ENCODE measurements at regions of chr11 and their contacts with region 1.

Region 1: GRCh38 chr11:75150879-75151278 is at the start of gene SLCO2B1:
- DNase-seq: no peak
- H3K4me3 Mint-ChIP-seq: no peak within 1 kb of the TSS
- H3K27ac Mint-ChIP-seq: no peak within 1 kb of the TSS
- H3K4me1 Mint-ChIP-seq: peaks cover 4% of the 10 kb centered on the region
- H3K27me3 Mint-ChIP-seq: peaks cover 7% of the 10 kb centered on the region
- total RNA-seq, gene SLCO2B1: not detected

Region 2: GRCh38 chr11:75022759-75023396 is 128.0 kb before region 1 on chr11:
- CTCF ChIA-PET with region 1: interaction called, 11 read pairs
- POLR2A ChIA-PET with region 1: no interaction called
- intact Hi-C with region 1: no loop called
- DNase-seq: peak; percentile 85
- H3K4me3 Mint-ChIP-seq: no peak overlapping the region
- H3K27ac Mint-ChIP-seq: no peak overlapping the region
- H3K4me1 Mint-ChIP-seq: no peaks in the 10 kb centered on the region
- H3K27me3 Mint-ChIP-seq: no peaks in the 10 kb centered on the region

Measured in activated CD4-positive, alpha-beta memory T cell treated with anti-CD3 and anti-CD28 coated beads for 36 hours (primary cell).